Activated naive CD4-positive, alpha-beta T cell treated with anti-CD3 and anti-CD28 coated beads for 36 hours (primary cell): ENCODE measurements at regions of chr2 and their contacts with region 1.

Region 1: GRCh38 chr2:85302121-85302520 is 25.7 kb downstream of the TGOLN2 start:
- DNase-seq: no peak
- H3K4me3 Mint-ChIP-seq: no peak overlapping the region
- H3K27ac Mint-ChIP-seq: no peak overlapping the region
- H3K4me1 Mint-ChIP-seq: peaks cover 13% of the 10 kb centered on the region
- H3K27me3 Mint-ChIP-seq: no peaks in the 10 kb centered on the region

Region 2: DNA sequence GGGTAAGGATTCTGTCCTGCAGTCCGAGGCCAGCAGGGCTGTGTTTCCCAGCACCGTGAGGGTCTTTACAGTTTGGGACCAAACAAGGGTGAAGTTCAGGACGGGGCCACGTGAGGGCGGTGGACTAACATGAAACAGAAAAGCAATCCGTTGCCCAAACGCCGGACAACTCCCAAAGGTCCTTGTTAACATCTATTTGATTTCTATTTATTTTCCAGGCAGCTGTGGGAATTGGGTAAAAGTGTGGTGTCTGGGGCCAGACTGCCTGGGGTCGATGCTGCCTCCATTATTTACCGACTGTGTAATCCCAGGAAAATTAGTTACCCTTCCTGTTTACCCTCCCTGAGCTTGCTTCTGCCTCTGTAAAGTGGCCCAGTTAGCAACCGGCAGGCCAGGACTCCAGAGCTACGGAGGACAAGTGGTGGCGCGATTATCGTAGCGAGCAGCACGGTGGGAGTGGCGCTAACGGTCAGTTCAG is 235.2 kb before region 1 on chr2:
- CTCF ChIA-PET with region 1: interaction called, 19 read pairs
- intact Hi-C with region 1: no loop called
- DNase-seq: peak; percentile 65
- H3K4me3 Mint-ChIP-seq: peak overlapping the region; percentile 24
- H3K27ac Mint-ChIP-seq: no peak overlapping the region
- H3K4me1 Mint-ChIP-seq: peaks cover 4% of the 10 kb centered on the region
- H3K27me3 Mint-ChIP-seq: peaks cover 14% of the 10 kb centered on the region

Region 3: GRCh38 chr2:85132834-85133637 is 169.1 kb before region 1 on chr2 and contains the start of gene TCF7L1:
- CTCF ChIA-PET with region 1: interaction called, 3 read pairs
- intact Hi-C with region 1: loop called (anchors 2 kb)
- DNase-seq: peak; percentile 52
- H3K4me3 Mint-ChIP-seq: peak within 1 kb of the TSS; percentile 67
- H3K27ac Mint-ChIP-seq: no peak within 1 kb of the TSS
- H3K4me1 Mint-ChIP-seq: peaks cover 9% of the 10 kb centered on the region
- H3K27me3 Mint-ChIP-seq: peaks cover 53% of the 10 kb centered on the region
- total RNA-seq, gene TCF7L1: 0.07 TPM in 1 of 2 experiments, not detected in the other

Region 4: GRCh38 chr2:85266146-85267041 is 35.7 kb before region 1 on chr2:
- CTCF ChIA-PET with region 1: interaction called, 42 read pairs
- intact Hi-C with region 1: loop called (anchors 1 kb)
- DNase-seq: peak; percentile 80
- H3K4me3 Mint-ChIP-seq: no peak overlapping the region
- H3K27ac Mint-ChIP-seq: no peak overlapping the region
- H3K4me1 Mint-ChIP-seq: no peaks in the 10 kb centered on the region
- H3K27me3 Mint-ChIP-seq: no peaks in the 10 kb centered on the region

Region 5: GRCh38 chr2:85288244-85288725 is 13.8 kb before region 1 on chr2:
- CTCF ChIA-PET with region 1: interaction called, 61 read pairs
- intact Hi-C with region 1: loop called (anchors 1 kb)
- DNase-seq: no peak
- H3K4me3 Mint-ChIP-seq: no peak overlapping the region
- H3K27ac Mint-ChIP-seq: no peak overlapping the region
- H3K4me1 Mint-ChIP-seq: peaks cover 17% of the 10 kb centered on the region
- H3K27me3 Mint-ChIP-seq: no peaks in the 10 kb centered on the region

Region 6: GRCh38 chr2:85318222-85319074 is 16.3 kb after region 1 on chr2:
- CTCF ChIA-PET with region 1: interaction called, 30 read pairs
- intact Hi-C with region 1: no loop called
- DNase-seq: peak; percentile 77
- H3K4me3 Mint-ChIP-seq: peak overlapping the region; percentile 32
- H3K27ac Mint-ChIP-seq: peak overlapping the region; percentile 88
- H3K4me1 Mint-ChIP-seq: peaks cover 59% of the 10 kb centered on the region
- H3K27me3 Mint-ChIP-seq: no peaks in the 10 kb centered on the region

Region 7: GRCh38 chr2:85551698-85552678 is 249.9 kb after region 1 on chr2:
- CTCF ChIA-PET with region 1: interaction called, 8 read pairs
- intact Hi-C with region 1: loop called (anchors 1 kb)
- DNase-seq: peak; percentile 95
- H3K4me3 Mint-ChIP-seq: no peak overlapping the region
- H3K27ac Mint-ChIP-seq: no peak overlapping the region
- H3K4me1 Mint-ChIP-seq: peaks cover 2% of the 10 kb centered on the region
- H3K27me3 Mint-ChIP-seq: no peaks in the 10 kb centered on the region